CD8-positive, alpha-beta T cell (primary cell): ENCODE measurements at regions of chr11 and their contacts with region 1.

Region 1: DNA sequence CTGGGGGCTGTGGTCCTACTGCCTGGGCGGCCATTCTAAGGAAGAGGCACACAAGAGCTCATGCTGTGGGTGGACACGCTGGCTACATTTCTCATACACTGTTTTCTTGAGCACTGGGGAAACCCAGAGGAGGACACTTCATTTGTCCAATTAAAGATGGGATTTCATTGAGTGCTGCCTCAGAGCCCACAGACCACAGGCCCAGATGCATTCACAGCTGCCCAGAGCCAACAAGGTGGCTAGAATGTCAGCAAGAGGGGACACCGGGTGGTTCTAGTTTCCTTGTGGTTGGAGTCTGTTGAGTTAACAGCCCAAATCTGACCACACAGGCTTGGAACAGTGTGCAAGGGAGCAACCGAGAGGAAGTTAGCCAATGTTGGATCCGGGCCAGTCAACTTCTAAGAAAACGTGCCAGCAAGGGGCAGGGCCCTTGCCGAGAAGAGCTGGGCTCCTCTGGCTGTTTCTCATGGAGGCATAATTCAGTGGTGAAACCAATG is 35.0 kb upstream of the SORL1 start:
- DNase-seq: peak; percentile 18 to 73 (median 49)
- ATAC-seq: peak; percentile 30
- H3K4me3 ChIP-seq: no peak overlapping the region
- H3K4me3 Mint-ChIP-seq: peak overlapping the region; percentile 38
- H3K27ac ChIP-seq: peak overlapping the region; percentile 33 to 61
- H3K27ac Mint-ChIP-seq: peak overlapping the region; percentile 87
- H3K4me1 ChIP-seq: peaks cover 57% of the 10 kb centered on the region
- H3K4me1 Mint-ChIP-seq: peaks cover 58% of the 10 kb centered on the region
- H3K27me3 ChIP-seq: no peaks in the 10 kb centered on the region
- H3K27me3 Mint-ChIP-seq: no peaks in the 10 kb centered on the region
- CTCF ChIP-seq: no peak

Region 2: DNA sequence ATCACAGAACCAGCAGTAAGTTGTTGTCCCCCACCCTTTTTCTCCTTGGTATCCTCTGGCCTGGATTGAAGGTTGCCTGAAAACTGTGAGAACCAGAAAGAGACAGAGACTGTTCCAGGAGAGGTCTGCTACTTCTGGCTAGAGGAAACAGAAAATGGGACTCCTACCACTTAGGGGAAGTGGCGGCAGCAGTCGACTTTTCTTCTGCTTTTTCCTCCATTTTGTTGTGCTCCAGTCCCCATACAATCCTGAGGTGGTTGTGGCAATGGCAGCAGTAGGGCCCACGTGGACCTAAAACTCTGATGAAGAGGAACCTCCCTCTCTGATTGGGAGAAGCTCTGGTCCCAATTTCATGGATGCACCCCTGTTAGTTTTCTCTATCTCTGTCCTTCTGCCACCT is 41.0 kb before region 1 on chr11:
- CTCF ChIA-PET with region 1: interaction called, 4 read pairs
- POLR2A ChIA-PET with region 1: interaction called, 5 read pairs
- intact Hi-C with region 1: loop called in 1 of 2 experiments (anchors 5 kb)
- DNase-seq: no peak
- ATAC-seq: no peak
- H3K4me3 ChIP-seq: no peak overlapping the region
- H3K4me3 Mint-ChIP-seq: no peak overlapping the region
- H3K27ac ChIP-seq: no peak overlapping the region
- H3K27ac Mint-ChIP-seq: no peak overlapping the region
- H3K4me1 ChIP-seq: peaks cover 47% of the 10 kb centered on the region
- H3K4me1 Mint-ChIP-seq: peaks cover 71% of the 10 kb centered on the region
- H3K27me3 ChIP-seq: no peaks in the 10 kb centered on the region
- H3K27me3 Mint-ChIP-seq: no peaks in the 10 kb centered on the region
- CTCF ChIP-seq: no peak